ENCODE measurements at regions of chr3 and their contacts with region 1.

Region 1: GRCh38 chr3:47989981-47990440 is 26.2 kb downstream of the MAP4 start:
- DNase-seq: peak; percentile 91
- H3K4me3 Mint-ChIP-seq: no peak overlapping the region
- H3K27ac Mint-ChIP-seq: no peak overlapping the region
- H3K4me1 Mint-ChIP-seq: peaks cover 5% of the 10 kb centered on the region
- H3K27me3 Mint-ChIP-seq: no peaks in the 10 kb centered on the region

Region 2: GRCh38 chr3:47522082-47522987 is 467.7 kb before region 1 on chr3:
- intact Hi-C with region 1: loop called (anchors 1 kb)
- DNase-seq: peak; percentile 93
- H3K4me3 Mint-ChIP-seq: no peak overlapping the region
- H3K27ac Mint-ChIP-seq: peak overlapping the region; percentile 41
- H3K4me1 Mint-ChIP-seq: peaks cover 4% of the 10 kb centered on the region
- H3K27me3 Mint-ChIP-seq: no peaks in the 10 kb centered on the region

Region 3: DNA sequence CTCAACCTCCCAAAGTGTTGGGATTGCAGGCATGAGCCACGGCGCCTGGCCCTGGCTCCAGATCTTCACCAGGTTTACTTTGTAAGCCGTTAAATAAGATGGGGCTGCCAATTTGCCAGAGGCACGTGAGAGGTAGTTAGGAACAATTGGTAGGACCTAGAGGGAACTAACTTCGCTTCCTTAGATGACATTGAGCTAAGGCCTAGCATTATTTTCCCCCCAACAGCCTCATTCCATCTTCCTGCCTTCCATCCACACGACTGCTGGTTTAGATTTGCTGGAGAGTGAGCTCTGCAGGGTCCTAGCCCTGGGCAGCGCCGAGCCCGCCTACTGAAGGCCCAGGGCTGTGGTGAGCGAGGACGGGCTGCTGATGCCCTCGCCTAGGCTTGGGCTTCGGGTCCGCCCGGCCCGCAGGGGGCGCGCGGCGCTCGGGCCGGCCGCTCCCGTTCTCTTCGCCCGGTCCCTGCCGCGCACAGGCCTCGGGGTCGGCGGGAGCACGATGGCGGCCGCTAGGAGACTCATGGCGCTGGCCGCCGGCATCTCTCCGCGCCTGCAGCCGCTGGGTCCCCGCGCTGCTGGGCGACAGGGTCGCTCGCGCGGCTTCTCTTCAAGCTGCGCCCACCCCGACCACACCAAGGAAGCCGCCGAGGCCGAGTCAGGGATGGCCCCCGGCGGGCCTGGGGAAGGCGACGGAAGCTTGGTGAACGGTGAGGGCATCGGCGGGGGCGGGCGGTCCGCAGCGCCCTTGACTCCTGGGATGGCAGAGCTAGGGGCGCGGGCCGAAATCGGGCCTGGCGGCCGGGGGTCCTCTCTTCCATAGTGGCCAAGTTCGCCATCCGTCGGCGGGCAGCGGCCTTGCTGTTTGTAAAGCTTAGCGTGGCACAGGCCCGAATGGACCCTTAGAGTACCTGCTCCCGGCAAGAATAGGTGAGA is 165.2 kb before region 1 on chr3:
- intact Hi-C with region 1: loop called (anchors 1 kb)
- DNase-seq: peak; percentile 95
- H3K4me3 Mint-ChIP-seq: peak overlapping the region; percentile 93
- H3K27ac Mint-ChIP-seq: peak overlapping the region; percentile 83
- H3K4me1 Mint-ChIP-seq: peaks cover 31% of the 10 kb centered on the region
- H3K27me3 Mint-ChIP-seq: no peaks in the 10 kb centered on the region

Region 4: DNA sequence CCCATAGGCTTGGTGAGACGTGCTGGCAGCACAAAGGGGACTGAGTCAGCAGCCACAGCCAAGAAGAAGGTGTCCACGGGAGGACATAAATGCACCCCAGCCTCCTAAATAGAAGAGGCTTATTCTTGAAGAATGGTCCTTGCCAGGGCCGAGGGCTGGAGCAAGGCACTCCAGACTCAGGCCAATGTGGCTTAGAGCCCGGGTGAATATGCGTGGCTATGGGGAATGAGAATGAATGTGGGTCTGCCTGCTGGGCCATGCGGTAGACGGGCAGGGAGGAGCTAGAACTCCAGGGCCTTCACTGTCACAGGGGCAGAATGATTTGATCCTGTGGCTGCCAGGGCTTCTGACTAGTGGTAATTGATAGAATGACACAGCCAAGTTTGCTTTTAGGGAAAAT is 153.0 kb before region 1 on chr3:
- intact Hi-C with region 1: loop called (anchors 1 kb)
- DNase-seq: no peak
- H3K4me3 Mint-ChIP-seq: no peak overlapping the region
- H3K27ac Mint-ChIP-seq: peak overlapping the region; percentile 40
- H3K4me1 Mint-ChIP-seq: peaks cover 5% of the 10 kb centered on the region
- H3K27me3 Mint-ChIP-seq: no peaks in the 10 kb centered on the region

Region 5: DNA sequence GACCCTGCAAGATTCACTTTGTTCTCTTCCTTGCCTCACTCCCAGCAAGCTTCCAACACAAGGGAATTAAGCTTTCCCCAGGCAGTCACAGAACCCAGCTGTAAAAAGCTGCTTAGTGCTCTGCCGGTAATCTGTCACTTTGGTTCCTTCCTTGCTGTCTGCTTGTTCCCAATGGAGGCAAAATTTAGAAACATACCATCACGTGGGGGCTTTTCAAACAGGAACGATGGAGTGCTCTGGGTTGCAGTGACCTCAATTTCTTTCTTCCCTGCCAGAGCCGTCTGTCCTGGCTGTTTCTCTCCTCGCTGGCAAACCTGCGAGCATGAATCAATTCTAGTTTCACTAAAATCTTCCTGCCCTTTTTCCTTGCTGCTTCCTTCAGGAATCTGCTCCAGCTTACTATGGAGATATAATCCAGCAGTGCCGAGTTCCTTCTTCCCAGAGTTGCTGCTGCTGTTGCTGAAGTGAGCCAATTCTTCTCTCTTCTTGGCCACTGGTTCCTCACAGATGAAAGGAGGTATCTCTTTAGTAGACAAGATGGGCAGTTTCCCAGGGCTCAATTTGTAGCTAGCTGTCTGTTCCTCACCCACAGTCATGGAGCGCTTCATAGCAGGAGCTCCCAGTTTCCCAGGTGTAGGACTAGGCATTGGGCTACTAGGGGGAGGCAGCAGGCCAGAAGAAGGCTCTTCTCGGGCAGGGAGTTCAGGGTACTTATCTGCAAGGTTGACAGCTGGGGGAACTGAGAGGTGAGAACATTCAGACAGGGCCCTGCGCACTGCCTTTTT is 99.0 kb before region 1 on chr3:
- intact Hi-C with region 1: loop called (anchors 10 kb)
- DNase-seq: no peak
- H3K4me3 Mint-ChIP-seq: no peak overlapping the region
- H3K27ac Mint-ChIP-seq: peak overlapping the region; percentile 36
- H3K4me1 Mint-ChIP-seq: peaks cover 8% of the 10 kb centered on the region
- H3K27me3 Mint-ChIP-seq: no peaks in the 10 kb centered on the region

Region 6: DNA sequence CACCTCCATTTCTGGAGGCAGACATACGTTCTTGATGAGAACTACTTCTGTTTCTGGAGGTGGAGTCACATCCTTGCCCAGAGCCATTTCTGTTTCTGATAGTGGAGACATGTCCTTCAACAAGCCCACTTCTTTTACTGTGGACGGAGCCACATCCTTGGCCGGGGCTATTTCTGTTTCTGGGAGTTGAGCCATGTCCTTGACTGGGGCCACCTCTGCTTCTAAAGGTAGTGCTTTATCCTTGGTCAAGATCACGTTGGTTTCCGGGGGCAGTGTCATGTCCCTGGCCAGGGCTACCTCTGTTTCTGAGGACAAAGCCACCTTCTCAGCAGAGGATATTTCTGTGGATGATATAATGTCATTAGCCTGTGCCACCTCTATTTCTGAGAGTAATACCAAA is 73.8 kb before region 1 on chr3:
- intact Hi-C with region 1: no loop called
- DNase-seq: no peak
- H3K4me3 Mint-ChIP-seq: no peak overlapping the region
- H3K27ac Mint-ChIP-seq: no peak overlapping the region
- H3K4me1 Mint-ChIP-seq: no peaks in the 10 kb centered on the region
- H3K27me3 Mint-ChIP-seq: no peaks in the 10 kb centered on the region

Region 7: GRCh38 chr3:48151058-48151806 is 161.2 kb after region 1 on chr3:
- intact Hi-C with region 1: loop called (anchors 1 kb)
- DNase-seq: peak; percentile 90
- H3K4me3 Mint-ChIP-seq: no peak overlapping the region
- H3K27ac Mint-ChIP-seq: no peak overlapping the region
- H3K4me1 Mint-ChIP-seq: peaks cover 4% of the 10 kb centered on the region
- H3K27me3 Mint-ChIP-seq: no peaks in the 10 kb centered on the region